Heart left ventricle (tissue), 16 donors: ENCODE measurements at regions of chr15 and their contacts with region 1.

Region 1: DNA sequence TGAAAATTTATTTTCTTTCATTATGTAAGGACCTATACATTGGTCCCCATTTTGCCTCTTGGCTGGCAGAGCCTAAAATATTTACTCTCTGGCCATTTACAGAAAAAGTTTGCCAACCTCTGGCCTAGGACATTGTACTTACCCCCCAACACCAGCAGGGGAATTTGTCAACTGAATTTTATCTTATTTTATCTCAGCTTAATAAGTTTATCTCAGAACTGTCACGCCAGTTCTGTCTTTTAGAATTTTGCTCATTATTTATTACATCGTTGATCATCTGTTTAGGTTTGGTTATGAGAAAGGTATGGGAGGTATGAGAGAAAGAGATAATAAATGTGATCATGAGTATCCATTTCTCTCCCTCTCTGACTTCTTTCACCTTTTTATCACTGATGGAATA is 38.3 kb downstream of the CHD2 start:
- DNase-seq: no peak
- ATAC-seq: no peak
- H3K4me3 ChIP-seq: no peak overlapping the region
- H3K27ac ChIP-seq: no peak overlapping the region
- H3K4me1 ChIP-seq: peaks cover 0 to 33% (median 2%) of the 10 kb centered on the region in 12 donors
- H3K27me3 ChIP-seq: no peaks in the 10 kb centered on the region
- CTCF ChIP-seq: peak in 4 of 12 donors; percentile 13 to 26 (median 16)
- POLR2A ChIP-seq: no peak

Region 2: GRCh38 chr15:92981333-92981732 is 42.9 kb after region 1 on chr15:
- intact Hi-C with region 1: loop called in 1 of 10 experiments (anchors 5 kb)
- DNase-seq: no peak
- ATAC-seq: no peak
- H3K4me3 ChIP-seq: no peak overlapping the region
- H3K27ac ChIP-seq: no peak overlapping the region
- H3K4me1 ChIP-seq: peaks cover 0 to 7% (median 0%) of the 10 kb centered on the region in 12 donors
- H3K27me3 ChIP-seq: no peaks in the 10 kb centered on the region
- CTCF ChIP-seq: no peak
- POLR2A ChIP-seq: no peak

Region 3: DNA sequence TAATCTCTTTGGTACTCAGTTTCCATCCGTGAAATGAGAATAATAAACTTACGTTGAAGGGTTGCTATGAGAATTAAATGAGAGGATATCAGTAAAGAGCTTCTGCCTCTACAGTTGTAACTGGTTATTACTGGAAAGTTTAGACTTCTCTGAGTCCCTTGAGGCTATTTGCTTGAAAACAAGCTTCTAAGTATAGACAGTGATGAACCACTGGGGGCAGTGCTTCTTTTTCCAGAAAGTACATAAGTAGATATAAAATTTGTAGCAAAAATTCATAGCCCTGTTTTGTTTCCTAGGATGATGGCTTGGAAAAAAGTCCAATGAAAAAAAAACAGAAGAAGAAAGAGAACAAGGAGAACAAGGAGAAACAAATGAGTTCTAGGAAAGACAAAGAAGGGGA is 63.5 kb after region 1 on chr15:
- intact Hi-C with region 1: loop called in 4 of 10 experiments (anchors 5 to 10 kb)
- DNase-seq: no peak
- ATAC-seq: no peak
- H3K4me3 ChIP-seq: no peak overlapping the region
- H3K27ac ChIP-seq: peak overlapping the region in 2 of 12 donors; percentile 18 to 32
- H3K4me1 ChIP-seq: no peaks in the 10 kb centered on the region
- H3K27me3 ChIP-seq: no peaks in the 10 kb centered on the region
- CTCF ChIP-seq: peak in 5 of 12 donors; percentile 5 to 34 (median 11)
- POLR2A ChIP-seq: no peak